ENCODE measurements at regions of chr16 and their contacts with region 1.

Region 1: GRCh38 chr16:85821441-85822135 is 22.1 kb downstream of the COX4I1 start:
- DNase-seq: peak; percentile 87
- ATAC-seq: peak; percentile 95
- H3K4me3 Mint-ChIP-seq: no peak overlapping the region
- H3K27ac Mint-ChIP-seq: no peak overlapping the region
- H3K4me1 Mint-ChIP-seq: peaks cover 5% of the 10 kb centered on the region
- H3K27me3 Mint-ChIP-seq: peaks cover 2% of the 10 kb centered on the region
- CTCF ChIP-seq: peak; percentile 96

Region 2: DNA sequence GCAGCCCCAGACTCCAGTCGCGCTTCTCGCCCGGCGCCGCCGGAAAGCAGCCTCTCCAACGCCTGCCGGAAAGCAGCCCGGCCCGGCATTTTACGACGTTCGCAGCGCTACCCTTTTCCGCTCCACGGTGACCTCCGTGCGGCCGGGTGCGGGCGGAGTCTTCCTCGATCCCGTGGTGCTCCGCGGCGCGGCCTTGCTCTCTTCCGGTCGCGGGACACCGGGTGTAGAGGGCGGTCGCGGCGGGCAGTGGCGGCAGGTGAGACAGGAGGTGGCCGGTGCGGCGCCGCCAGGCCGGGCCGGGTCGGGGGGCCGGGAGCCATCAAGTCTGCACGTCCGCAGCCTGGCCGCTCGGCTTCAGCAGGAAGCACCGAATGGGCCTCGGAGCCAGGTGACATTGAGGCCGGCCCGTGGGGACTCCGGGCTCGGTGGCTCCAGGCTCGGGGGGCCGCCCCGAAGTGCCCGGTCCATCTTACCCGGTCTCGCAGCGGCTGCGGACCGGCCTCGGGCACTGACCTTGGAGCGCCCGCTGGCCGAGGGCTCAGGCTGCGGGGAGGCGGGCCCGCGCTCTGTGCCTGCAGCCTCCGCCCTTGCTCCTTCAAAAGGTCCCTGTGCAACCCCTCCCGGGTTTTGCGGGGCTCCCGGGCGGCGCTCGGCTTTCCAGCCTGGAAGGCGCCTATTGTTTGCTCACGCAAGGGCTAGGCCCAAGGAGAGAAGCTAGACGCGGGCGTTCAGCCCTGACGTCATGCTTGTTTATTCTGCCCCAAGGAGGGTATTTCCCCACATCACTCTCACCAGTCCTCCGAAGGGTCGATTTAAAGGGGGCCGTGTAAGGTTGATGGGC is 21.9 kb before region 1 on chr16 and contains the starts of genes COX4I1 and EMC8:
- CTCF ChIA-PET with region 1: interaction called, 41 read pairs
- POLR2A ChIA-PET with region 1: interaction called, 4 read pairs
- intact Hi-C with region 1: no loop called
- DNase-seq: peak; percentile 96
- ATAC-seq: peak; percentile 93
- H3K4me3 Mint-ChIP-seq: peak within 1 kb of the TSS; percentile 89
- H3K27ac Mint-ChIP-seq: peak within 1 kb of the TSS; percentile 90
- H3K4me1 Mint-ChIP-seq: peaks cover 65% of the 10 kb centered on the region
- H3K27me3 Mint-ChIP-seq: no peaks in the 10 kb centered on the region
- CTCF ChIP-seq: no peak
- total RNA-seq, gene COX4I1: 515 to 543 TPM
- total RNA-seq, gene EMC8: 32.4 to 38.6 TPM

Region 3: DNA sequence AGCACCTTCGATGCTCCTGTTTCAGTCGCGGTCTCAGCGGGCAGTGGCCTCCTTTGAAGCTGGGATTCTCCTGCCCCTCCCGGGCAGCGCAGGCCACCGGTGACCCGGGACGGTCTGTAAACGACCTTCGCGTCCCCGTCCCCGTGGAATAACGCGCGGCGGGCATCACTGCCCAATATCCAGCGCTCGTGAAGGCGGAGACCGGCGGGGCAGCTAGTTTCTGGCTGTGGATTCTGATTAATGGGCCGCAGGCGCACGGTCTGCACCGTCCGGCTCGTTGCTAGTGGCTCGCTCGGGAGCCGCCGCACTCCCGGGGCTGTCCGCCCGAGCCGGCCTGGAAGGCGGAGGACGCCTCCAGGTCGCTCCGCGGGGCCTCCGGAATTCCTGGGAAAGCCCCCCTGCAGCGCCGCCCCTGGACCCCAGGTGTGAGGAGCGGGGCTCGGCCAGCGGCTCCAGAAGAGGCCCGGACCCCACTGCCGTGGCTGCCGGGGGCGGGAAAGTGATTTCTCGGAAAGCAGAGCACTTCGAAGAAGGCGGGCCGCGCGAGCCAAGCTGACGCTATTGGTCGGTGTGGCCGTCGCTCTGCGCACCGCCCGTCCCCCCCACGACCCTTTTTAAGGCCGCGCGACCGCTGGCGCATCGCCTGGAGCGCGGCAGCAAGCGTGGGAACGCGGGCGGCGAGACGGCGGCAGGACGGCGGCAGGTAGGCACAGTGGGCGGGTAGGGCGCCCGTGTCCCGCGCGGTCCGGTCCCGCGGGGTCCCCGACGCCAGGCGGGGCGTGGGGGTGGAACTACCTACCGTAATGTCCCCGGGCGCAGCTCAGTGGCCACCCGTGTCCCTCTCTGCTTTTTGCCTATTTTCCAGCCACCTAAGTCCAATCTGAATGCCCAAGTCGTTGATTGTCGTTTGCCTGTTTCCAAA is 77.2 kb after region 1 on chr16 and contains the start of gene IRF8:
- CTCF ChIA-PET with region 1: interaction called, 148 read pairs
- POLR2A ChIA-PET with region 1: interaction called, 13 read pairs
- intact Hi-C with region 1: loop called (anchors 2 kb)
- DNase-seq: peak; percentile 90
- ATAC-seq: peak; percentile 80
- H3K4me3 Mint-ChIP-seq: peak within 1 kb of the TSS; percentile 86
- H3K27ac Mint-ChIP-seq: peak within 1 kb of the TSS; percentile 90
- H3K4me1 Mint-ChIP-seq: peaks cover 38% of the 10 kb centered on the region
- H3K27me3 Mint-ChIP-seq: no peaks in the 10 kb centered on the region
- CTCF ChIP-seq: no peak
- total RNA-seq, gene IRF8: 221 to 224 TPM

Region 4: DNA sequence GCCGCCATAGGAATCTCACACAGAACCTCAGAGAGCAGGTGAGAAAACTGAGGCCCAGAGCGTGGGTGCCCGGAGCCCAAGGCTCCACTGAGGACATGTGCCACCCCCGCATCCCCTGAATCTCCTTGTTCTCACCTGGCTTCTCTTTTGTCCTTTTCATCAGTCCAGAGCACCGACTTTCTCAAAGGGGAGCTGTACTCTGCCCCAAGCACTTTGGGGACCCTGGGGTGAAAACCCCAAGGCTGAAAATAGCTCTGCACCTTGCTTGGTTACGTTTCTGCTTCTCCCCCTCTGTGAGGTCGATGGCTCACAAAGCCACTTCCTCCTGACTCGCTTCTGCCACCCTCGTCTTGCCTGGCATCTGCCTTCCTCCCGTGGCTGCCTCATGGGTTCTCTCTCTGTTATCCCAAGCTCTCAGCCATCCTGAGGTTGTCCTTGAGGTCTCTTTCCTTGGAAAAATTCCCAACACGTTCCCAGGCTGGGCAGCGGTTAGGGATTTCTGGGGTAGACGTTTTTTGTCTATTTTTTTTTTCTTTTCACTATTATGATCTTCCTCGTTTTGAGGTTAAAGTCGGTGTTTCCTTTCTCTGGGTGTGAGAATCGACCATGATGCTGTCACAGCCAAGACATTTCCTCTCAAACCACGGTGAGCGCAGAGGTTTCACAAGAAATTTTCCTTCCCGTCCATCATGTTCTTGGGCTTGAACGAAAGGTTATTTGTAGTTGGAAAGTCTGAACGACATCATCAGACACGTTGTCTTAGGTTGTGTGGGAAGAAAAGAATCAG is 114.6 kb after region 1 on chr16:
- CTCF ChIA-PET with region 1: interaction called, 16 read pairs
- POLR2A ChIA-PET with region 1: no interaction called
- intact Hi-C with region 1: no loop called
- DNase-seq: peak; percentile 93
- ATAC-seq: peak; percentile 84
- H3K4me3 Mint-ChIP-seq: peak overlapping the region; percentile 64
- H3K27ac Mint-ChIP-seq: peak overlapping the region; percentile 99
- H3K4me1 Mint-ChIP-seq: peaks cover 72% of the 10 kb centered on the region
- H3K27me3 Mint-ChIP-seq: no peaks in the 10 kb centered on the region
- CTCF ChIP-seq: no peak

Region 5: GRCh38 chr16:85986931-85987749 is 165.6 kb after region 1 on chr16:
- CTCF ChIA-PET with region 1: interaction called, 257 read pairs
- POLR2A ChIA-PET with region 1: interaction called, 5 read pairs
- intact Hi-C with region 1: loop called (anchors 1 kb)
- DNase-seq: peak; percentile 64
- ATAC-seq: no peak
- H3K4me3 Mint-ChIP-seq: no peak overlapping the region
- H3K27ac Mint-ChIP-seq: peak overlapping the region; percentile 62
- H3K4me1 Mint-ChIP-seq: peaks cover 78% of the 10 kb centered on the region
- H3K27me3 Mint-ChIP-seq: peaks cover 1% of the 10 kb centered on the region
- CTCF ChIP-seq: peak; percentile 77

Region 6: GRCh38 chr16:86016201-86016871 is 194.7 kb after region 1 on chr16:
- CTCF ChIA-PET with region 1: interaction called, 180 read pairs
- POLR2A ChIA-PET with region 1: interaction called, 7 read pairs
- intact Hi-C with region 1: loop called (anchors 1 kb)
- DNase-seq: peak; percentile 27
- ATAC-seq: peak; percentile 67
- H3K4me3 Mint-ChIP-seq: no peak overlapping the region
- H3K27ac Mint-ChIP-seq: no peak overlapping the region
- H3K4me1 Mint-ChIP-seq: peaks cover 23% of the 10 kb centered on the region
- H3K27me3 Mint-ChIP-seq: peaks cover 35% of the 10 kb centered on the region
- CTCF ChIP-seq: peak; percentile 93

Measured in activated CD8-positive, alpha-beta T cell treated with anti-CD3 and anti-CD28 coated beads for 36 hours (primary cell).